PC-9 (cell line): ENCODE measurements at regions of chr14 and their contacts with region 1.

Region 1: DNA sequence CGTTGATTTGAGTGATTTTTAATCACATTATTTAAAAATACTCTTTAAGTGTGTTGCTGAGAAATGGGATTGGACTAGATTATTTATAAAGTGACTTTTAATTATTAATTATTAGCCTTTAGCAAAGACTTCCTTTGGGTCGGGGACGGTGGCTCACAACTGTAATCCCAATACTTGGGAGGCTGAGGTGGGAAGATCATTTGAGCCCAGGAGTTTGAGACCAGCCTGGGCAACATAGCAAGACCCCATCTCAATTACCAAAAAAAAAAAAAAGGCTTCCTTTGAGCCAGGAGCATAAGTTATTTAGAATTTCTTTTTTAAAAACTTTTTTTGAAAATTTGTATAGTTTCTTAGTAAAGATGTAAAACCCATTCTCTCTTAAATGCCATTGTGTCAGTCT is 8.8 kb downstream of the CHURC1 start:
- DNase-seq: no peak
- H3K4me3 ChIP-seq: no peak overlapping the region
- H3K27ac ChIP-seq: no peak overlapping the region
- H3K4me1 ChIP-seq: peaks cover 6% of the 10 kb centered on the region; the same call in 1 of the 2 replicates
- H3K27me3 ChIP-seq: no peaks in the 10 kb centered on the region
- CTCF ChIP-seq: no peak

Region 2: DNA sequence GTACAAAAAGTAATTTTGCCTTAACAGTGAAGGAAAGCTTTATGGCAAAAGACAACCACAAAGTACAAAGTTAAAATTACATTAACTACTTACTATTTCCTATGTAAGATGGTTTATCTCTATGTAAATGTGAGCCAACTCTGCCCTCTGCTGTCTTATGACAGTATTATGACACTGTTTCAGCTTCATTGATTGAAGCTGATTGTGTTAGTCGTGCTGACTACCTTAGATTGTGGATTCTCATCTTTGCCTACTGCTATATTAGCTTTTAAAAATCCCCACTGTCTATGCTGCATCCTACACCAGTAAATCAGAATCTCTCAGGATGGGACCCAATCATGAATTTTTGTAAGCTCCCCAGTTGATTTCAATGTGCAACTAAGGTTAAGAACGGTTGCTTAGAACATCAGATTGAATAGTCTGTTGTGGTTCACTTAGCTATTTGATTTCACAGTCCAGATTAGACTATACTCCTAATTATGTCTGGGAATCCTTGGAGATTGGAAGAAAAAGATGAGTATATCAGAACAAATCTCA is 31.1 kb before region 1 on chr14:
- CTCF ChIA-PET with region 1: no interaction called
- POLR2A ChIA-PET with region 1: no interaction called
- intact Hi-C with region 1: no loop called
- DNase-seq: peak; percentile 23 to 63
- H3K4me3 ChIP-seq: no peak overlapping the region
- H3K27ac ChIP-seq: no peak overlapping the region
- H3K4me1 ChIP-seq: no peaks in the 10 kb centered on the region
- H3K27me3 ChIP-seq: no peaks in the 10 kb centered on the region
- CTCF ChIP-seq: peak; percentile 89

Region 3: DNA sequence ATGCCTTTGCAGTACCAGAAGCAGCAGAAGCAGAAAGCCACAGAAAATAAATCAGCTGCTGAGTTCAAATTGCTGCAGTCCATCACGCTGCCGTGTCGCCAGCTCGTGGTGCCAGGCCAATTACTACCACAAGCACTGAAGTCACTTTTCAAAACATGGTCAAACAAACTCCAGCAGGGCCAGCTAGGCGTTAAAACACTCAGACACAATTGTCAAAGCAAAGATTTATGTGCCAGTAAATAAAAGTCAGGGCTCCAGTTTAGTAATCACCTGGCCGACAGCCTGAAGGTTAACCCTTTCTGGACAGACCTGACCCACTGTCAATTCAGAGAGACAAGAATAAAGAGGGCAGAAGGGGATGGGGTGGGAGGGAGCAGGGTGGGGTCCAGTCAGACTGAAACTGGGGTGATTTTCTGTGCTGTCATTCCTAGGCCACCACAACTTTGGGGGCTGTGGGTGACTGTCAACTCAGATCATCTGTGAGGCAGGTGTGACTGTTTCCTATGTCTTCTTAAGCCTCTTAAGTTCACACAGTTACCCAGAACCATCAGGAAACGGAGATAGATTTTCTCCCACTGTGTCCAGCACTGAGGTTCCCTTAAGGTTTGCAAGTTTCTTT is 379.7 kb after region 1 on chr14:
- CTCF ChIA-PET with region 1: no interaction called
- POLR2A ChIA-PET with region 1: interaction called, 12 read pairs
- intact Hi-C with region 1: no loop called
- DNase-seq: peak; percentile 34 to 73
- H3K4me3 ChIP-seq: no peak overlapping the region
- H3K27ac ChIP-seq: peak overlapping the region; percentile 20
- H3K4me1 ChIP-seq: peaks cover 41% of the 10 kb centered on the region
- H3K27me3 ChIP-seq: no peaks in the 10 kb centered on the region
- CTCF ChIP-seq: no peak